PC-3 (cell line): ENCODE measurements at regions of chr17 and their contacts with region 1.

Region 1: GRCh38 chr17:44123356-44124117 is at the start of gene HDAC5:
- DNase-seq: peak; percentile 97
- ATAC-seq: peak; percentile 92
- H3K4me3 ChIP-seq: peak within 1 kb of the TSS; percentile 72
- H3K27ac ChIP-seq: peak within 1 kb of the TSS; percentile 57
- H3K4me1 ChIP-seq: peaks cover 13% of the 10 kb centered on the region
- H3K27me3 ChIP-seq: no peaks in the 10 kb centered on the region
- CTCF ChIP-seq: peak; percentile 77
- total RNA-seq, gene HDAC5: 39.1 and 47.1 TPM in 2 replicates

Region 2: GRCh38 chr17:44053125-44053872 is 70.2 kb before region 1 on chr17:
- CTCF ChIA-PET with region 1: no interaction called
- POLR2A ChIA-PET with region 1: no interaction called
- intact Hi-C with region 1: no loop called
- DNase-seq: no peak
- ATAC-seq: no peak; the same call in 1 of the 2 replicates
- H3K4me3 ChIP-seq: no peak overlapping the region
- H3K27ac ChIP-seq: no peak overlapping the region
- H3K4me1 ChIP-seq: no peaks in the 10 kb centered on the region
- H3K27me3 ChIP-seq: no peaks in the 10 kb centered on the region
- CTCF ChIP-seq: no peak

Region 3: GRCh38 chr17:44070455-44071197 is 52.9 kb before region 1 on chr17 and contains the start of gene G6PC3:
- CTCF ChIA-PET with region 1: no interaction called
- POLR2A ChIA-PET with region 1: interaction called, 17 read pairs
- intact Hi-C with region 1: no loop called
- DNase-seq: peak; percentile 99
- ATAC-seq: peak; percentile 79
- H3K4me3 ChIP-seq: peak within 1 kb of the TSS; percentile 70
- H3K27ac ChIP-seq: peak within 1 kb of the TSS; percentile 85
- H3K4me1 ChIP-seq: peaks cover 26% of the 10 kb centered on the region
- H3K27me3 ChIP-seq: no peaks in the 10 kb centered on the region
- CTCF ChIP-seq: no peak
- total RNA-seq, gene G6PC3: 60.1 and 69.5 TPM in 2 replicates

Region 4: GRCh38 chr17:44170499-44171201 is 47.1 kb after region 1 on chr17 and contains the start of gene ASB16:
- CTCF ChIA-PET with region 1: interaction called, 14 read pairs
- POLR2A ChIA-PET with region 1: interaction called, 10 read pairs
- intact Hi-C with region 1: no loop called
- DNase-seq: no peak
- ATAC-seq: no peak; the same call in 1 of the 2 replicates
- H3K4me3 ChIP-seq: no peak within 1 kb of the TSS
- H3K27ac ChIP-seq: no peak within 1 kb of the TSS
- H3K4me1 ChIP-seq: peaks cover 9% of the 10 kb centered on the region
- H3K27me3 ChIP-seq: no peaks in the 10 kb centered on the region
- CTCF ChIP-seq: no peak
- total RNA-seq, gene ASB16: 0.35 and 0.51 TPM in 2 replicates